HEK293T (cell line): ENCODE measurements at regions of chr5 and their contacts with region 1.

Region 1: DNA sequence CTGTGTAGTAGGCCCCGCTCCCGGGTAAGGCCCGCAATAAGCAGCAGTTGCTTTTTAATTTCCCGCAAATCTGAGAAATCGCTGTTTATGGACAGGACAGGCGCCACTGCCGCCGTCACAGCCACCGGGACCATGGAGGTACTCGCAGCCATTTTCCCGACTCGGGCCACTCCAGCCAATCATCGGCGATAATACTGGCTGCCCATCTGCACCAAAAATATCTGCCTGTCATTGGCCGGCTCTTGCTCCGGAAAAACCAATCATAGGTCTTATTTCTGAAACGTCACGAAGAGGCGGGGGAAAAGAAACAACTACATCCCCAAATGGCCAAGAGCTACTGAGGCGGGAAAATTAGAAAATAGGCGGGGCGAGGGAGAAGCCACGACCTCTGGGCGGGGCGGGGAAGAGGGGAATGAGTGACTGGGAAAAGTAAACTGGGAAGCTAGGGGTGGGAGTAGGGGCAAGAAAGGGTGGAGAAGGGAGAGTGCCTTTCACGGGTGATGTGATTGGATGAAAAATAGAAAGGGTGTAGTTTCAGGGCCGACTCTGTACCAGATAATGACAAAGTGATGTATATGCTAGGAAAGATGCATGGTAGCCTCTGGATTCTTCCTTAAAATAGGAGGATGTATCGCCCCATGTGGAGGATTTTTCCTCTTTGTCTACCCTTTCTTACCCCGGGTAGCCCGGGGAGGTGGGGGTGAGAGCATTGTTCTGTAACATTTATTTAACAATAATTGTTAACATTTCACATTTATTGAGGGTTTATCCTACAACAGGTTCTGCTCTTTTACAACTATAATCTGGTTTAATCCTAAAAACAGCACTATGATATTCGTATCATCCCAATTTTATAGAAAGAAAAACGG is at the start of gene CDC23:
- DNase-seq: peak; percentile 95

Region 2: DNA sequence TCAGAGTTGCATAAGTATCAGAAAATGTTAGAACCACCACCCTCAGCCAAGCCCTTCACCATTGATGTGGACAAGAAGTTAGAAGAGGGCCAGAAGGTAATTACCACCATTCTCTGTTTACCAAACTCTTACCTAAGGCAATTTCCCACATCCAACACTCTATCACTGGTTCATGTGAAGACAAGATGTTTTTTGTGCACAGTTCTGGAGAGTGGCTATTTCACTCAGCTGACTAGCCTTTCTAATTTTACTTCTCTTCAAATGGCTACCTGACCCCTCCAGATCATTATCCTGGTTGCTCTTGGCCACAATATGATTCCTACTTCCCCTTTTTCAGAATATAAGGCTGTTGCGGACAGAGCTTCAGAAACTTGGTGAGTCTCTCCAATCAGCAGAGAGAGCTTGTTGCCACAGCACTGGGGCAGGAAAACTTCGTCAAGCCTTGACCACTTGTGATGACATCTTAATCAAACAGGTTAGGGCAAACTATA is 27.4 kb before region 1 on chr5:
- CTCF ChIA-PET with region 1: interaction called, 4 read pairs
- POLR2A ChIA-PET with region 1: interaction called, 20 read pairs
- DNase-seq: no peak

Region 3: DNA sequence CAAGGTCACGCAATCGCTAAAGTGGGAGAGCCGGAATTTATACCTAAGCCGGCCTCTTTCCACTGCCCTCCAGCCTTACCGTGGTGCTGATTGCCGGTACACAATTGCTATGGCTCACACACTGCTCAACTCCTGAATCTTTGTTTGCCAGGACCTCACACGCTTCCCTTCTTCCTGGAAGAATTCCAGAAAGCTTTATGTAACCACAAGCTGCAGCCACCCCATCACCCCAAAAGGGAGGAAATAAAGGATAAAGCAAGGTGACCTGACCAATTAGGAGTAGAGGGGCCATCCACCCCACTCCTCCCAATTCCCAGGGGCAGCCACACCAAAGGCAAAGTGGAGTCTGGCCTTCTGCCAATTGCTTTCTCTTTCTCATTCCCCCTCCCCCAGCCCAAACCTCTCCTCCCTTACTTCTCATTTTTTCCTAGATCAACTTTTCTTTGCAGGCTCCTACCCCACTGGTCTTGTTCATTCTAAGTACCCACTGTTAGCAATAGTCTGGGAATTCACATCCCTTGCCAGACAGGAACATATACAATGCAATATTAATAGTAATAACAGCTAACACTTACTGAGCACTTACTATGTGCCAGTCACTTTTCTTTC is 17.7 kb after region 1 on chr5:
- CTCF ChIA-PET with region 1: no interaction called
- POLR2A ChIA-PET with region 1: interaction called, 31 read pairs
- DNase-seq: no peak

Region 4: DNA sequence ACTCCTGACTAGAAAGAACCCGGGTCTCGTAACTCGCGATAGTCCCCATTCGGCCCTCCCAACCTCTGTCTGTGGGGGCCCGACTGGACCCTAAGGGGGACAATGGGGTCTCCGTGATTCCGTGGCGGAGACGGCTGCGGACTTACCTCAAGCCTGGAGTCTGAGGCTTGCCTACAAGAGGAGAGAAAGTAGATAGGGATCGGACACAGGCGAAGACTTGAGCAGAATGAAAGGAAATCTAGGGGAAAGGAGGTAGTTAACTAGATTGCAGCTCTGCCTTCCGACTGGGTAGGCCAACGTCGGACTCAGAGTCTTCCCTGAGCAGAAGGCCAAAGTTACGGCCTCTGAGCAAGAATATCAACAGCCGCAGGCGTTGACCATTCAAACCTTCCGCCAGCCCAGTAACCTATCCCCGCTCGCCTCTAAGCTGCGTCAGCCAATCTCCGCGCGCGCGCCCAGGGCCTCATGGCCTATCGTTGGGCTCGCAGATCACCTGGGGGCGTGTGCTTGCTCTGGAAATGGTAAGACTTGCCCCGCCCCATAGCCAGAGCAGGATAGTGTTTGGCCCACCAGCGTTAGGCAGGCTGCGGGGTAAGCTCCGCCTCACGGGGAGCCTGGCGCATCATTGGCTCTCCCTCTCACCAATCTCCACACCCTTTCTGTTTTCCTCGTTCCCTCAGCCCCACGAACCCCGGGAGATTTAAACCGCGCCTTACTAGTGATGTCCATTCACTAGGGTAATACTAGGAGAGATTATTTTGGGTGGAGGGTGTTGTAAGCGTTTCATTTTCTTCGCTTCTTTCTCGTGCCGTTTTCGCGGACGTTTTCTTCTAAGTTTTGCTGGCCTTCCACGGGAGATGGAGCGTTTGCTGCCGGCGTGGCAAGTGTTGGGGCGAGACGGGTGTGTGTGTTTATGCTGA is 118.3 kb after region 1 on chr5 and contains the start of gene CDC25C:
- CTCF ChIA-PET with region 1: no interaction called
- POLR2A ChIA-PET with region 1: interaction called, 24 read pairs
- DNase-seq: peak; percentile 94